ENCODE measurements at regions of chr2 and their contacts with region 1.

Region 1: GRCh38 chr2:238288650-238289573 is 502 bp upstream of the PER2 start:
- DNase-seq: peak; percentile 97
- H3K4me3 Mint-ChIP-seq: peak overlapping the region; percentile 89
- H3K27ac Mint-ChIP-seq: peak overlapping the region; percentile 85
- H3K4me1 Mint-ChIP-seq: peaks cover 36% of the 10 kb centered on the region
- H3K27me3 Mint-ChIP-seq: no peaks in the 10 kb centered on the region

Region 2: DNA sequence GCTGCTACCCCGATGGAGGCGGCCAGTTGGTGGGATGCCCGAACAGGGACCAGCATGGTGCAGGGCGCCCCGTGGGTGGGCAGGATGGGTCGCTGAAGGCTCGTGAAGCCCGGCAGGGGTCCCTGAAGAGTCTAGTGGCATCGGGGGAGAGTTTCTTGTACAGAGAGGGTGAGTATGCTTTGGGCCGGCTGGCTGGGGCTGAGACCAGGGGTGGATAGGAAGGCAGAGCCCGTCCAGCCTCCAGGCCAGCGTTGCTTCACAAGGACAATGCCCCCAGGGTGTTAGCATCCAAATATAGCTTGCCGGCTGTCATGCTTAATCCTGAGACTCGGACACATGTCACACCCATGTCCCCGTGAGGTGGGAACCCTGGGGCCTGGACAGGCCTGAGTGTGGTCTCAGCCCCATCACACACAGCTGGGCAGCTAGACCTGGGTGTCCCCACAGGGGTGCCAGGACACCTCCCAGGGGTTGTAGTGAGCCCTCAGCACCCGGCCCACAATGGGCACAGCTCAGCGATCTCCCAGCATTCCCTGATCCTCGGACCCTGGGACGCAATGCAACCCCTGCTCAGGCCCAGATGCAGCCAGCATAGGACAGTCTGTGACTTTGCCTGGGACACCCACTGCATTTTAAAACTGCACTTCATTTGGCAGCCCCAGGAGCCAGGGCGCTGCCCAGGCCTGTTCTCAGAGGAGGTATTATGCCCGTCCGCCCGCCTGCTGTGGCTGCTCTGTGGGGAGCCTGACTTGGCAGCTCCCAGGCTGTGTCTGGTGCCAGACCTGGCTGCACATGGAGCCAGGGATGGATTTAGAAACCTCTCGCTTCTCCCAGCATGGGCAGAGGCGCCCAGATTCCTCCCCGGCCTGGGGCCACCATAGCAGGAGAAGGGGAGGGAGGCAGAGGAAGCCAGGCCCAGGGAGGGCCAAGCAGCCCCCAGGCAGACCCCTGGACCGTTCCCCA is 393.1 kb before region 1 on chr2:
- CTCF ChIA-PET with region 1: no interaction called
- intact Hi-C with region 1: loop called (anchors 5 kb)
- DNase-seq: no peak
- H3K4me3 Mint-ChIP-seq: no peak overlapping the region
- H3K27ac Mint-ChIP-seq: no peak overlapping the region
- H3K4me1 Mint-ChIP-seq: peaks cover 34% of the 10 kb centered on the region
- H3K27me3 Mint-ChIP-seq: no peaks in the 10 kb centered on the region

Region 3: DNA sequence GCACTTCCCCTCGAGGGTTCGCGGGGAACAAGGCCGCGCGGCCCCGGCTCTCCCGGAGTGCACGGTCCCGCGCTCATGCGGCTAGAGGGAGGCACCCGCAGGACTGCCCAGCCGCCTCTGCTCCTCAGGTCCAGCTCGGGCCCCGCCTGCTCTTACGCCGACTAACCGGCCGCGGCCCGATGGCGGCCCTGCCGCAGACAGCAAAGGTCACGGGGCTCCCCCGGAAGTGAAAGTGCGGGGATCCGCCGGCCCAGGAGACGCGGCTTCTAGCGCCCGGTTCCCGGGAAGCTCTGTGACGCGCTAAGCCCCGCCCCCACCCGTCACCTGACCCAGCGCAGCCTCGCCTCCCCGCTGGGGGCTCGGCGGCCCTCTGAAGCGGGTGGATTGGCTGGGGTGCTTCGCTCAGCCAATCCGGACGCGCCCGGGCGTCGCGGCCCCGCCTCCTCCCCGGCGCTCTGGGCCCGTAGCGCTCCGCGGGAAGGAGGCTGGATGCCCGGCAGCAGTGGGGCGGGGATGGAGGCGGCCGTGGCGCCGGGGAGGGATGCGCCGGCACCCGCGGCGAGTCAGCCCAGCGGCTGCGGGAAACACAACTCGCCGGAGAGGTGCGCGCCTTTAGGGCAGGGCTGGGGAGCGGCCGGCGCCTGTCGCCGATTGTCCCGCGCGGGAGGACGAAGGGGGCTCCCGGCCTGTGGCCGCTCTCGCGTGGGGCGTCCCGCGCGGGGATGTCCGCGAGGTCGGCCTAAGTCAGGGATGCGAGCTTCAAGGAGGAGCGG is 228.2 kb before region 1 on chr2 and contains the start of gene SCLY:
- CTCF ChIA-PET with region 1: no interaction called
- intact Hi-C with region 1: loop called (anchors 2 kb)
- DNase-seq: peak; percentile 99
- H3K4me3 Mint-ChIP-seq: peak within 1 kb of the TSS; percentile 90
- H3K27ac Mint-ChIP-seq: peak within 1 kb of the TSS; percentile 87
- H3K4me1 Mint-ChIP-seq: peaks cover 48% of the 10 kb centered on the region
- H3K27me3 Mint-ChIP-seq: peaks cover 3% of the 10 kb centered on the region
- total RNA-seq, gene SCLY: 46.4 to 46.7 TPM

Region 4: GRCh38 chr2:238203094-238203972 is 85.6 kb before region 1 on chr2 and contains the start of gene ILKAP:
- CTCF ChIA-PET with region 1: no interaction called
- intact Hi-C with region 1: loop called (anchors 2 kb)
- DNase-seq: peak; percentile 89
- H3K4me3 Mint-ChIP-seq: peak within 1 kb of the TSS; percentile 80
- H3K27ac Mint-ChIP-seq: peak within 1 kb of the TSS; percentile 77
- H3K4me1 Mint-ChIP-seq: peaks cover 41% of the 10 kb centered on the region
- H3K27me3 Mint-ChIP-seq: no peaks in the 10 kb centered on the region
- total RNA-seq, gene ILKAP: 46.6 to 46.7 TPM

Region 5: GRCh38 chr2:238239872-238240751 is 48.8 kb before region 1 on chr2 and contains the start of gene HES6:
- CTCF ChIA-PET with region 1: no interaction called
- intact Hi-C with region 1: loop called (anchors 2 kb)
- DNase-seq: peak; percentile 78
- H3K4me3 Mint-ChIP-seq: peak within 1 kb of the TSS; percentile 82
- H3K27ac Mint-ChIP-seq: no peak within 1 kb of the TSS
- H3K4me1 Mint-ChIP-seq: peaks cover 4% of the 10 kb centered on the region
- H3K27me3 Mint-ChIP-seq: peaks cover 24% of the 10 kb centered on the region
- total RNA-seq, gene HES6: 3.1 to 4.0 TPM

Region 6: DNA sequence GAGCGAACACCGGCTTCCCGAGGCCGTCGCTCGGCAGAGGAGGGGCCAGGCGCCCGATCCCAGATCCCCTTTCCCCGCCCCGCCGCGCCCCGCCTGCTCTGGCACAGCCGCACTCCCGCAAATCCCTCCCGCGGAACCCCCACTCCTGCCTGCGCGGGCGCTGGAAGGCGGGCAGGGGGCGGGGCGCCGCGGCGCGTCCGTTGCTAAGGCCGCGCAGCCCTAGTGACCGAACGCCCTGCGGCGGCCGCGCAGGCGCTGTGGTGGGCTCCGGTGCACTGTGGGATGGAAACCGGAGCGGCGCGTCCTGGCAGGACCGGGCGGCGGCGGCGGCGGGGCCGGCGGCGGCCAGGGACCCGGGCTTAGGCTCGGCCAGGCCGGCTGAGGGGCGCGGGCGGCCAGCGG is 31.3 kb after region 1 on chr2 and contains the start of gene TRAF3IP1:
- CTCF ChIA-PET with region 1: no interaction called
- intact Hi-C with region 1: loop called (anchors 1 kb)
- DNase-seq: peak; percentile 85
- H3K4me3 Mint-ChIP-seq: peak within 1 kb of the TSS; percentile 73
- H3K27ac Mint-ChIP-seq: no peak within 1 kb of the TSS
- H3K4me1 Mint-ChIP-seq: peaks cover 20% of the 10 kb centered on the region
- H3K27me3 Mint-ChIP-seq: no peaks in the 10 kb centered on the region
- total RNA-seq, gene TRAF3IP1: 3.6 to 6.1 TPM

Region 7: GRCh38 chr2:238426568-238427434 is 137.9 kb after region 1 on chr2 and contains the start of gene ASB1:
- CTCF ChIA-PET with region 1: no interaction called
- intact Hi-C with region 1: loop called (anchors 1 kb)
- DNase-seq: peak; percentile 80
- H3K4me3 Mint-ChIP-seq: peak within 1 kb of the TSS; percentile 89
- H3K27ac Mint-ChIP-seq: peak within 1 kb of the TSS; percentile 91
- H3K4me1 Mint-ChIP-seq: peaks cover 42% of the 10 kb centered on the region
- H3K27me3 Mint-ChIP-seq: no peaks in the 10 kb centered on the region
- total RNA-seq, gene ASB1: 29.9 to 33.7 TPM